Psoas muscle (tissue), 8 donors: ENCODE measurements at regions of chr1 and their contacts with region 1.

Region 1: GRCh38 chr1:231278100-231278790 is 37.2 kb downstream of the GNPAT start:
- DNase-seq: peak; percentile 61 to 89
- ATAC-seq: peak; percentile 94 to 97 (median 96)
- H3K4me3 ChIP-seq: no peak overlapping the region
- H3K27ac ChIP-seq: peak overlapping the region; percentile 78
- H3K4me1 ChIP-seq: peaks cover 15% of the 10 kb centered on the region
- H3K27me3 ChIP-seq: no peaks in the 10 kb centered on the region
- CTCF ChIP-seq: no peak

Region 2: DNA sequence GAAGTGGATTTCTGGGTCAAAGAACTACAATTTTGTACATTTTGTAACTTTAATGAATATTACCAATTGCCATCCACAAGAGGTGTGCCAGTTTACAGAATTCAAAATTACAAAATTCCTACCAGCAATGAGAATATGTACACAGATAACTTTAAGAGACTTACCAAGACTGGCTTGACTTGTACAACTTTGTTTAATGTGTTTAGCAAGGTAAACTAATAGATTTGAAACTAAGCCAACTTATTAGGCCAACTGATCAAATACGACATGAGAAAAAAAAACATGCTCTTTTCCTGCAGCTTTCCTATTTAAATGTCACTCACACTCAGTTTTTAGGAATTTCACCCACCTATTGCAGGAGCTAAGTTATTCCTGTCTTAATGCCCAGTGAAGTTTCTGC is 48.0 kb after region 1 on chr1:
- intact Hi-C with region 1: loop called in 1 of 2 experiments (anchors 5 kb)
- DNase-seq: no peak
- ATAC-seq: no peak
- H3K4me3 ChIP-seq: no peak overlapping the region
- H3K27ac ChIP-seq: no peak overlapping the region
- H3K4me1 ChIP-seq: no peaks in the 10 kb centered on the region
- H3K27me3 ChIP-seq: no peaks in the 10 kb centered on the region
- CTCF ChIP-seq: no peak